ENCODE measurements at regions of chr1 and their contacts with region 1.

Region 1: GRCh38 chr1:171781176-171781875 is at the start of gene METTL13:
- DNase-seq: peak; percentile 98
- ATAC-seq: peak; percentile 98
- H3K4me3 Mint-ChIP-seq: peak within 1 kb of the TSS; percentile 94
- H3K27ac Mint-ChIP-seq: peak within 1 kb of the TSS; percentile 98
- H3K4me1 Mint-ChIP-seq: peaks cover 12% of the 10 kb centered on the region
- H3K27me3 Mint-ChIP-seq: no peaks in the 10 kb centered on the region
- CTCF ChIP-seq: no peak
- total RNA-seq, gene METTL13: 40.4 to 46.5 TPM (median 43.6 TPM) in 3 replicates

Region 2: GRCh38 chr1:171741872-171742576 is 39.3 kb before region 1 on chr1 and contains the start of gene VAMP4:
- CTCF ChIA-PET with region 1: interaction called, 5 read pairs
- POLR2A ChIA-PET with region 1: interaction called, 12 read pairs
- DNase-seq: peak; percentile 92
- ATAC-seq: peak; percentile 92
- H3K4me3 Mint-ChIP-seq: peak within 1 kb of the TSS; percentile 100
- H3K27ac Mint-ChIP-seq: peak within 1 kb of the TSS; percentile 99
- H3K4me1 Mint-ChIP-seq: peaks cover 41% of the 10 kb centered on the region
- H3K27me3 Mint-ChIP-seq: no peaks in the 10 kb centered on the region; the same call in 1 of the 2 replicates
- CTCF ChIP-seq: no peak
- total RNA-seq, gene VAMP4: 8.9 to 11.4 TPM (median 9.4 TPM) in 3 replicates

Region 3: GRCh38 chr1:171817511-171818265 is 36.4 kb after region 1 on chr1:
- CTCF ChIA-PET with region 1: no interaction called
- POLR2A ChIA-PET with region 1: no interaction called
- DNase-seq: no peak
- ATAC-seq: peak; percentile 79
- H3K4me3 Mint-ChIP-seq: no peak overlapping the region
- H3K27ac Mint-ChIP-seq: peak overlapping the region; percentile 54
- H3K4me1 Mint-ChIP-seq: peaks cover 30% of the 10 kb centered on the region
- H3K27me3 Mint-ChIP-seq: no peaks in the 10 kb centered on the region
- CTCF ChIP-seq: no peak

Measured in WTC11 (cell line).